CD4-positive, alpha-beta memory T cell (primary cell): ENCODE measurements at regions of chr16 and their contacts with region 1.

Region 1: DNA sequence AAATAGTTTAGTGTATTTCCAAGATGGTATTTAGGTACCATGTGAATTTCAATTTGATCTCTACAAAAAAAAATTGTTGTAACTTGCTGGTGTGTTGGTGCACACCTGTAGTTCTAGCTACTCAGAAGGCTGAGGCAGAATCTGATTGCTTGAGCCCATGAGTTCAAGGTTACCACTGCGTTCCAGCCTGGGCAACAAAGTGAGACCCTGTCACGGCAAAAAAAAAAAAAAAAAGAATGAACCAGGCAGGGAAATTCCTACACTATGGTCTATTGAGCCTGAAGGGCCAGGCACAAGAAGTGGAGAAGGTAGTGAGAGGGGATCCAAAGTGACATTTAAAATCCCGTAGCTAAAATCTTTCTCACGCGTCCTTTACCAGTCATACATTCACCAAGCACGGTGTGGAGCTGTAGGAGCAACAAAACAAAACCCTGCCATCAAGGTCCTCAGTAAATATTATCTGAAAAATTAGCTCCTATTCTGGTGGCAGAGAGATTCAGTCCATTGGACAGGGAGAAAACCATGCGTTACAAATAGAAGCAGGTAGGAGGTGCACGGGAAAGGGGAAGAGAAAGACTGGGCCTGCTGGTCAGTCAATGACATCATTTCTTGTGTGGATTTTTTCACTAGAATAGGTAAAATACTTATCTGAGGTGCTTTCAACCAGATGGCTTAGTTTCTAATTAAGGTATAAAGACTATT is 27.3 kb downstream of the TXNDC11 start:
- DNase-seq: no peak
- H3K4me3 ChIP-seq: no peak overlapping the region
- H3K4me3 Mint-ChIP-seq: no peak overlapping the region
- H3K27ac ChIP-seq: no peak overlapping the region
- H3K27ac Mint-ChIP-seq: peak overlapping the region in 1 of 7 donors; percentile 71
- H3K4me1 ChIP-seq: peaks cover 3% of the 10 kb centered on the region
- H3K4me1 Mint-ChIP-seq: peaks cover 12 to 32% (median 21%) of the 10 kb centered on the region in 4 donors
- H3K27me3 ChIP-seq: no peaks in the 10 kb centered on the region
- H3K27me3 Mint-ChIP-seq: no peaks in the 10 kb centered on the region

Region 2: DNA sequence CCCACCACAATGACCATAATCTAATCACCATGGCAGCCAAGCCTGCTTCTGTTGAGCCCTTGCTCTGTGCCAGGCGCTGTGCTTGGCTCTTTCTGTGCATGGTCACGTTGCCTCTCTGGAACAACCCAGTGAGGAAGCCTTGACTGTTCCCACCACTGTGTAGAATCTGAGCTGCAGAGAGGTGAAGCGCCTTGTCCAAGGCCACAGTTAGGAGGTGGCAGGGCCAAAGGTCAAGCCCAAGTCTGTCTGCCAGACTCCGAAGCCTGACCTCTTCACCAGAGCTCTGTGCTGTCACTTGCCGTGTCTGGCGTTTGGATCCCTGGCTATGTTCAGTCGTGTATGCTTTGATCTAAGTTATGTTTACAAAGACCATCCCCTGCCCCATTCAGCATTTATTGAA is 760.5 kb before region 1 on chr16:
- CTCF ChIA-PET with region 1: no interaction called
- POLR2A ChIA-PET with region 1: interaction called, 3 read pairs
- intact Hi-C with region 1: loop called (anchors 2 kb)
- DNase-seq: no peak
- H3K4me3 ChIP-seq: no peak overlapping the region
- H3K4me3 Mint-ChIP-seq: no peak overlapping the region
- H3K27ac ChIP-seq: no peak overlapping the region
- H3K27ac Mint-ChIP-seq: peak overlapping the region in 5 of 7 donors; percentile 3 to 77 (median 11)
- H3K4me1 ChIP-seq: peaks cover 26% of the 10 kb centered on the region
- H3K4me1 Mint-ChIP-seq: peaks cover 20 to 50% (median 29%) of the 10 kb centered on the region in 4 donors
- H3K27me3 ChIP-seq: no peaks in the 10 kb centered on the region
- H3K27me3 Mint-ChIP-seq: no peaks in the 10 kb centered on the region

Region 3: DNA sequence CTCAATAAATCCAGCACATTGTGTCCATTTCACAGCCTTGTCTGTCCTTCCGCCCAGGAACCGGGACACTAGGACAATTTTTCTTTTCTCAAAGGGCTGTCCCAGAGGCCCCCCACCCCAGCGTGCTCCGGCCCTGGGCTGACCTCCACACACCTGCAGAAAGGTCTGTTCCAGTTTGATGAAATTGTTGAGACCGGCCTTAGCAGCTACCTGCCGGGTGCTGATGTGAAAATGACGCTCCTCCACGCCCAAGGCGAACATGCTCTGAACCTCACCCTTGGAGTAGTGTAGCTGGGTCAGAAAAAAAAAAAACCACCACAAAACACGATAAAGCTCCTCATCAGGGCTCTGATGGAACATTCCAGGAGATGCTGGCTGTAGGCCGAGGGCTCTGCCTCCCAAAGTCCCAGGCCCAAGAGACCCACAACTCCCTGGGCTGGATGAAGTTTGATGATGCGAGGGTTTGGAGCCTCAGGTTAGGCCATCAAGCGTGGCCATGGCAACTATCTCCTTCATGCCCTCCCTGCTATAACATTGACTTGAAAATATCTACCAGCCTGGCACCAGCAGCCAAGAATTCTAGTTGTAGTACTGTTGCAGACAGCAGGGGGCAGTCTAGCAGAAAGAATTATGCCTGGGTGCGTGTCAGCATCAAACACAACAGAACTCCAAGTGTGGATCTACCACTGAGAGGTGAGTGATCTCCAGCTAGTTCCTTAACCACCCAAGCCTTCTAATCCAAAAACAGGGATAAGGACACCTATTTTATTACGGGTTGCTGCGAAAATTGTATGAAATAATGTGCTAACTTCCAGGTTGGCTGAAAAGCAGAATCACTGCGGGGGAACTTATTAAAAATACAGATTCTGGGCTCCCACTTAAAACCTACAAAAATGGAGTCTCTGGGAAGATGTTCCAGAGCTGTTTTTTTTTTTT is 308.1 kb before region 1 on chr16:
- CTCF ChIA-PET with region 1: interaction called, 59 read pairs
- POLR2A ChIA-PET with region 1: interaction called, 3 read pairs
- intact Hi-C with region 1: loop called (anchors 1 kb)
- DNase-seq: peak; percentile 61 to 75 (median 67)
- H3K4me3 ChIP-seq: no peak overlapping the region
- H3K4me3 Mint-ChIP-seq: peak overlapping the region in 1 of 8 donors; percentile 48
- H3K27ac ChIP-seq: no peak overlapping the region
- H3K27ac Mint-ChIP-seq: peak overlapping the region in 2 of 7 donors; percentile 80 to 84
- H3K4me1 ChIP-seq: no peaks in the 10 kb centered on the region
- H3K4me1 Mint-ChIP-seq: peaks cover 0 to 6% (median 4%) of the 10 kb centered on the region in 4 donors
- H3K27me3 ChIP-seq: no peaks in the 10 kb centered on the region
- H3K27me3 Mint-ChIP-seq: no peaks in the 10 kb centered on the region

Region 4: GRCh38 chr16:11535471-11535870 is 179.9 kb before region 1 on chr16:
- CTCF ChIA-PET with region 1: interaction called, 79 read pairs
- POLR2A ChIA-PET with region 1: interaction called, 4 read pairs
- intact Hi-C with region 1: loop called (anchors 1 kb)
- DNase-seq: no peak
- H3K4me3 ChIP-seq: no peak overlapping the region
- H3K4me3 Mint-ChIP-seq: no peak overlapping the region
- H3K27ac ChIP-seq: no peak overlapping the region
- H3K27ac Mint-ChIP-seq: no peak overlapping the region
- H3K4me1 ChIP-seq: no peaks in the 10 kb centered on the region
- H3K4me1 Mint-ChIP-seq: peaks cover 5 to 11% (median 10%) of the 10 kb centered on the region in 4 donors
- H3K27me3 ChIP-seq: no peaks in the 10 kb centered on the region
- H3K27me3 Mint-ChIP-seq: no peaks in the 10 kb centered on the region

Region 5: DNA sequence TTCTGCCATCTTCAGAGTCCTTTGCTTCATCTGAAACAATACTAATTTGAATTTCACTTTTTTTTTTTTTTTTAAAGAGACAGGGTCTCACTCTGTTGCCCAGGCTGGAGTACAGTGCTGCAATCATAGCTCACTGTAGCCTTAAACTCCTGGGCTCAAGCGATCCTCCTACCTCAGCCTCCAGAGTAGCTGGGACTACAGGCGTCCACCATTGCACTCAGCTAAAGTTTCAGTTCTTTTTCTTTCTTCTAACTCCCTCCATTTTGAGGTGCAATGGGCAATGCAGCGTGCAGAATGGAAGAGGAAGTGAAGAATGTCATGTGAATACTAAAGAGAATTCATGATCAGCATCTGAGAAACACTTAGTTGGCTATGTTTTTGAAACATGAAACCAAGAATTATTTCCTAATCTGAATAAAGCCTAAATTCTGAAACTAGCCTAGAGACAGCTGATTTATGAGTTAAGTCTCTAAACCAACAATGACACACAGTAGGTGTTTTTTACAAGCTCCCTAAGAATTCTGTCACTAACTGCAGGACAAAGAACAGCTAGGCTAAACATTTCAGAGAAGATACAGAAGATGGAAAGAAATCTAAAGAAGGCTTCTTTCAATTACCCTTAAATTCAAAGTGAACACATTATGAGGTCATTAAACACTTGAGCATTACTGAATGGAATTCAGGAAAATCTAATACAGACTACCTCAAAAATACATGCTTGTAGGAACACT is 26.2 kb before region 1 on chr16:
- CTCF ChIA-PET with region 1: interaction called, 12 read pairs
- POLR2A ChIA-PET with region 1: no interaction called
- intact Hi-C with region 1: no loop called
- DNase-seq: no peak
- H3K4me3 ChIP-seq: no peak overlapping the region
- H3K4me3 Mint-ChIP-seq: peak overlapping the region in 1 of 8 donors; percentile 52
- H3K27ac ChIP-seq: no peak overlapping the region
- H3K27ac Mint-ChIP-seq: peak overlapping the region; percentile 19 to 70 (median 48)
- H3K4me1 ChIP-seq: peaks cover 13% of the 10 kb centered on the region
- H3K4me1 Mint-ChIP-seq: peaks cover 11 to 52% (median 17%) of the 10 kb centered on the region in 4 donors
- H3K27me3 ChIP-seq: no peaks in the 10 kb centered on the region
- H3K27me3 Mint-ChIP-seq: no peaks in the 10 kb centered on the region